PC-9 (cell line): ENCODE measurements at regions of chr1 and their contacts with region 1.

Region 1: DNA sequence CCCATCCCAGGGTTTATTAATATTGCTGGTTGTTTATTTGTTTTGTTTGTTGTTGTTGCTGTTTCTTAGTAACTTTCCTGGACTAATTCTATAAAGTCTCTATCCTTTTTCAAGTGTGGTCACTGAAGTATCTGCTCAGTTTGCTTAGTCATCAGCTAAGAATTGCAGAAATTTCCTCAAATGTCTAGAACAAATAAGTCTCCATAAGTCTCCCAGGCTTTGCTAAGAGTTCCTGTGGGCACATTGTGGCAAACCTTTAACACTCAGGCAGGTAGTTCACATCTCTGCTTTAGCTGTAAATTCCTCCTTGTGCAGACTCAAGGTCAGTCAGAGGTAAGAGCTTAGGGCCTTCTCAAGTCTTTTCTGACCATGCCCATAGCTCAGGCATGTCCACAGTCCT is 38.9 kb upstream of the C1orf185 start:
- DNase-seq: peak; percentile 62 to 99
- H3K4me3 ChIP-seq: no peak overlapping the region; the same call in 1 of the 2 replicates
- H3K27ac ChIP-seq: peak overlapping the region; percentile 92
- H3K4me1 ChIP-seq: peaks cover 26% of the 10 kb centered on the region
- H3K27me3 ChIP-seq: no peaks in the 10 kb centered on the region
- CTCF ChIP-seq: no peak

Region 2: GRCh38 chr1:51000160-51000559 is 63.0 kb before region 1 on chr1:
- CTCF ChIA-PET with region 1: no interaction called
- POLR2A ChIA-PET with region 1: interaction called, 10 read pairs
- intact Hi-C with region 1: no loop called
- DNase-seq: no peak
- H3K4me3 ChIP-seq: no peak overlapping the region
- H3K27ac ChIP-seq: no peak overlapping the region
- H3K4me1 ChIP-seq: no peaks in the 10 kb centered on the region
- H3K27me3 ChIP-seq: no peaks in the 10 kb centered on the region
- CTCF ChIP-seq: no peak